ENCODE measurements at regions of chr5 and their contacts with region 1.

Region 1: GRCh38 chr5:78320401-78320800 is 25.9 kb upstream of the AP3B1 start:
- DNase-seq: peak; percentile 29
- H3K4me3 ChIP-seq: no peak overlapping the region
- H3K27ac ChIP-seq: no peak overlapping the region
- H3K4me1 ChIP-seq: no peaks in the 10 kb centered on the region
- H3K27me3 ChIP-seq: no peaks in the 10 kb centered on the region
- CTCF ChIP-seq: peak; percentile 72 to 75

Region 2: GRCh38 chr5:78232163-78232562 is 88.2 kb before region 1 on chr5:
- CTCF ChIA-PET with region 1: no interaction called
- dilution Hi-C with region 1: no loop called
- in situ Hi-C with region 1: no loop called
- intact Hi-C with region 1: no loop called
- DNase-seq: peak; percentile 2
- H3K4me3 ChIP-seq: no peak overlapping the region
- H3K27ac ChIP-seq: no peak overlapping the region
- H3K4me1 ChIP-seq: no peaks in the 10 kb centered on the region
- H3K27me3 ChIP-seq: no peaks in the 10 kb centered on the region
- CTCF ChIP-seq: no peak

Region 3: DNA sequence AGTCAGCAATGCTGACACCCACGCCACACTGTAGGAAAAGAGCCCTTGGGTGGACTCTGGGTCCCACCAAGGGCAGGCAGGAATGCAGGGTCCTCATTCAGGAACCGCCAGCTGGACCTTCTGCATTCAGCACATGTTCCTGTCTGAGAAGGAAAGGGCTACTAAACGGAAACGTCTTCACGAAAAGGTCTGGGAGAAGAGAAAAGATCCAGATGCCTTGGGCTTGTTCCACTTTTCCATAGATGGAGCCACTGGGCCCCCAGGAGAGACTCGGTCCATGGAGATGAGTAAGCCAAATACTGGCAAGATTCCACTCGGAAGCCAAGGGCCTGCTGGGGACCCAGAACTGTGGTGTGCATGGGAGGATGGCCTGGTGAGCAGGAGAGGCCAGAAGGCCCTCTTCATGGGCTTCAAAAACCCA is 289.8 kb after region 1 on chr5:
- CTCF ChIA-PET with region 1: no interaction called
- dilution Hi-C with region 1: no loop called
- in situ Hi-C with region 1: no loop called
- intact Hi-C with region 1: loop called (anchors 10 kb)
- DNase-seq: no peak
- H3K4me3 ChIP-seq: no peak overlapping the region
- H3K27ac ChIP-seq: no peak overlapping the region
- H3K4me1 ChIP-seq: peaks cover 15% of the 10 kb centered on the region
- H3K27me3 ChIP-seq: no peaks in the 10 kb centered on the region
- CTCF ChIP-seq: no peak

Measured in mammary epithelial cell (primary cell).